HepG2 (cell line): ENCODE measurements at regions of chr6 and their contacts with region 1.

Region 1: GRCh38 chr6:32190054-32190851 is at the start of gene PBX2:
- DNase-seq: peak; percentile 87
- ATAC-seq: peak; percentile 76
- H3K4me3 ChIP-seq: peak within 1 kb of the TSS; percentile 74 to 93 (median 79)
- H3K27ac ChIP-seq: peak within 1 kb of the TSS; percentile 80
- H3K4me1 ChIP-seq: peaks cover 46% of the 10 kb centered on the region
- H3K27me3 ChIP-seq: no peaks in the 10 kb centered on the region; a peak in 1 of 5 replicates
- CTCF ChIP-seq: peak; percentile 27; the same call in 1 of the 2 replicates
- EP300 ChIP-seq: 0 out of 4 replicates have a peak, but pooled peaks of 1 of the 2 experiments have one; percentile 23
- POLR2A ChIP-seq: peak in 1 of 2 experiments; percentile 45; a peak in 1 of 4 replicates
- RAD21 ChIP-seq: no peak
- total RNA-seq, gene PBX2: 42.3 and 45.2 TPM in 2 replicates

Region 2: GRCh38 chr6:31952140-31952805 is 238.0 kb before region 1 on chr6:
- CTCF ChIA-PET with region 1: no interaction called
- POLR2A ChIA-PET with region 1: no interaction called
- in situ Hi-C with region 1: no loop called
- intact Hi-C with region 1: no loop called
- DNase-seq: peak; percentile 71
- ATAC-seq: peak; percentile 88
- H3K4me3 ChIP-seq: no peak overlapping the region
- H3K27ac ChIP-seq: peak overlapping the region; percentile 27
- H3K4me1 ChIP-seq: peaks cover 38% of the 10 kb centered on the region
- H3K27me3 ChIP-seq: no peaks in the 10 kb centered on the region
- CTCF ChIP-seq: peak; percentile 93
- EP300 ChIP-seq: no peak
- POLR2A ChIP-seq: no peak
- RAD21 ChIP-seq: peak; percentile 97

Region 3: GRCh38 chr6:32177788-32178546 is 12.3 kb before region 1 on chr6 and contains the start of gene RNF5:
- CTCF ChIA-PET with region 1: no interaction called
- POLR2A ChIA-PET with region 1: interaction called, 127 read pairs
- in situ Hi-C with region 1: no loop called
- intact Hi-C with region 1: loop called (anchors 1 kb)
- DNase-seq: peak; percentile 100
- ATAC-seq: peak; percentile 90
- H3K4me3 ChIP-seq: peak within 1 kb of the TSS; percentile 96 to 98 (median 98)
- H3K27ac ChIP-seq: peak within 1 kb of the TSS; percentile 97
- H3K4me1 ChIP-seq: peaks cover 54% of the 10 kb centered on the region
- H3K27me3 ChIP-seq: no peaks in the 10 kb centered on the region; a peak in 1 of 5 replicates
- CTCF ChIP-seq: no peak
- EP300 ChIP-seq: peak; percentile 10 to 17; a peak in 1 of 4 replicates
- POLR2A ChIP-seq: peak; percentile 1 to 14; a peak in 1 of 4 replicates
- RAD21 ChIP-seq: no peak
- total RNA-seq, gene RNF5: 98.0 and 107 TPM in 2 replicates

Region 4: DNA sequence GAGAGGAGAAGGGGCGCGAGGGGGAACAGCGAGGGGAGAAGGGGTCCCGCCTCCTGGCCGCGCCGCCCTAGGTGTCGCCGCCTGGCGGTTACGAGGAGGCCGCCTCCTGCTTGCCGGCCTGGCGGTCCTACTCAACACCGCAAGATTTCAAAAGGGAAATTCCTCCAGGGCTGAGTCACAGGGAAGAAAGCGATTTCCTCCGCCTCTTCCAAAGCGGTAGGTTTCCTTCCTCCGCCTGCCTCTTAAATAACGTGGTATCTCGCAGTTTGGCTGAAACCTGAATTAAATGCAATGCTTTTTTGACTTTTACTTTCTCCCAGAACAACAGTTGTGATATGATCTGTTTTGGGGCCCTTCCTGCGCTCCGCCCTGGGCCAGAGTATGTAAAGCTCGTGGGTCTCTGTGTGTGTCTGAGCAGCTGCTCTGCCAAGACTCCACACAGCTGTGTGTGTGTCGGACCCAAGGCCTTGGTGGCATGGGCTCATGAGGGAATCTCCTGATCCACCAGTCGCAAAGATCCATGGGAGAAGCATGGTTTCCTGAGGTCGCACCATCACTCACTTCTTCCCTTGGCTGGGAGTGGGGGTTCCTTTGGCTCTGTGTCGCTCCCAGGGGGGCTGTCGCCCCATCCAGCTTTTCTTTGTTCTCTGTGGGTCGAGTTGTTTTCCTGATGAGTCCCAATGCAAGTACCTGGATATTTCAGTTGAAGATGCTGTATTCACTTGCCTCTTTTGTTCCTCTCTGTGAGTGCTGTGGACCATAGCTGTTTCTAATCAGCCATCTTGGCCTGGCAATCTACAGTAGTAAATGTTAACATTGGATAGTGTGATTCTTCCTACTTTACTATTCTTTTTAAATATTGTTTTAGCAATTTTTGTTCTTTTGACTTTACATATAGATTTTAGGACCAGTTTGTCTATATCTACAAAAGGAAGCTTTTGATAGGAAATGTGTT is 65.2 kb after region 1 on chr6:
- CTCF ChIA-PET with region 1: no interaction called
- POLR2A ChIA-PET with region 1: no interaction called
- in situ Hi-C with region 1: no loop called
- intact Hi-C with region 1: no loop called
- DNase-seq: peak; percentile 48
- ATAC-seq: peak; percentile 87
- H3K4me3 ChIP-seq: no peak overlapping the region; a peak in 1 of 6 replicates
- H3K27ac ChIP-seq: no peak overlapping the region
- H3K4me1 ChIP-seq: peaks cover 10% of the 10 kb centered on the region; the same call in 1 of the 2 replicates
- H3K27me3 ChIP-seq: peaks cover 0 to 14% of the 10 kb centered on the region in 2 experiments; a peak in 2 of 5 replicates
- CTCF ChIP-seq: peak; percentile 72
- EP300 ChIP-seq: no peak
- POLR2A ChIP-seq: no peak
- RAD21 ChIP-seq: no peak

Region 5: GRCh38 chr6:32375739-32376529 is 185.7 kb after region 1 on chr6:
- CTCF ChIA-PET with region 1: no interaction called
- POLR2A ChIA-PET with region 1: no interaction called
- in situ Hi-C with region 1: no loop called
- intact Hi-C with region 1: no loop called
- DNase-seq: no peak
- ATAC-seq: no peak
- H3K4me3 ChIP-seq: no peak overlapping the region
- H3K27ac ChIP-seq: no peak overlapping the region
- H3K4me1 ChIP-seq: peaks cover 11% of the 10 kb centered on the region
- H3K27me3 ChIP-seq: no peaks in the 10 kb centered on the region
- CTCF ChIP-seq: no peak
- EP300 ChIP-seq: no peak
- POLR2A ChIP-seq: no peak
- RAD21 ChIP-seq: no peak